ENCODE measurements at regions of chr1 and their contacts with region 1.

Region 1: DNA sequence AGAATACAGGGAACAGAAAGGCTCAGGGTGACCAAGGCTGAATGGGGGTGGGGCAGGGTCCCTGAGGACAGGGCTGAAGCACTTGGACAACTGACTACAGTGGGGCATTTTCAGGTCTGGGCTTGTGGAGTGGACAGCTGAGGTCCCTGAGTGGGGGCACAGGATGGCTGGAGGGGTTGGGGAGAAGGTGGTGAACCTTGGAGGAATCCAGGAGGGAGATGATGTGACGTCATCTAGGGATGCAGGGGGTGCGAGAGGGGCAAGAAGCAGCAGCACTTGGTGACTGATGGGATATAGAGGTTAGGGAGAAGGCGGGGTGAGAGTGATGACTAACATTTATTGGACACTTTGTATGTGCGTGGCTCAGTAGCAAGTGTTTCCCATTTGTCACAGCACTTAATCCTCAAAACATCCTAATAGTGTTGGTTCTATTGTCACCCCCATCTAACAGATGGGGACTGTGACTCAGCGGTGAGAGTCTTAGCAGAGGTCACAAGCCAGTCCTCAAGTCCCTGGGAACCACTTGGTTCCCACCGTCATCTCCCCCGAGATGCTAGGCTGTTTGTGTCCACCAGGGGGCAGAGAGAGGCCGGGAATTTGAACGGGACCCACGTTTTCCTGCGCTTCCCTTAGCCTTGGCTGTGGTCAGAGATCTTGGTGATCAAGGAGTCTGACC is 27.9 kb upstream of the BMP8B start:
- DNase-seq: peak; percentile 77
- H3K4me3 ChIP-seq: peak overlapping the region; percentile 54
- H3K27ac ChIP-seq: peak overlapping the region; percentile 52
- H3K4me1 ChIP-seq: no peaks in the 10 kb centered on the region
- CTCF ChIP-seq: peak; percentile 80

Region 2: GRCh38 chr1:39332291-39332690 is 484.3 kb before region 1 on chr1:
- CTCF ChIA-PET with region 1: no interaction called
- POLR2A ChIA-PET with region 1: no interaction called
- intact Hi-C with region 1: no loop called
- DNase-seq: no peak
- H3K4me3 ChIP-seq: no peak overlapping the region
- H3K27ac ChIP-seq: no peak overlapping the region
- H3K4me1 ChIP-seq: no peaks in the 10 kb centered on the region
- CTCF ChIP-seq: no peak

Region 3: DNA sequence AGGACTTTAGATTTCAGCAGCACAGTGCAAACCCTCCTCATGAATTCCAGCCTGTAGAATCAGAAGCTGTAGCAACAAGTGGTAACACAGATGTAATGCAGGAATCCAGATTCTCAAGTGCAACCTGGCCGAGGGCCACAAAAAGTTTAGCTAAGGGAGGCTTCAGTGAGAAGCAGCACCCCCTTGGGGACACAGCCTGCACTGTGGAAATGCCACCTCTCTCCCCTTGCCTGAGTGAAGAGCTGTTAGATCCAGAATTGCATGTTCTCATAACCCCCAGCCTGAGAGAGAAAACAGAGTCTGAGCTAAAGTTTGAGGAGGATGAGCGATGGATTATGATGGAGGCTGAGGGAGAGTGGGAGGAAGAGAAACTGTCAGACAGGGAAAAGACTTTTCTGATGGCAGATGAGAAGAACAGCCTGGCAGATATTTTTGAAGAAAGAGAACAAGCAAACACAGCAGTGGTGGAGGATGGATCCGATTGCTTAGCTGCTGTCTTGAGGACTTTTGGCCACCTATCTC is 405.6 kb before region 1 on chr1:
- CTCF ChIA-PET with region 1: no interaction called
- POLR2A ChIA-PET with region 1: no interaction called
- intact Hi-C with region 1: no loop called
- DNase-seq: peak; percentile 80
- H3K4me3 ChIP-seq: no peak overlapping the region
- H3K27ac ChIP-seq: no peak overlapping the region
- H3K4me1 ChIP-seq: peaks cover 39% of the 10 kb centered on the region
- CTCF ChIP-seq: peak; percentile 84

Region 4: DNA sequence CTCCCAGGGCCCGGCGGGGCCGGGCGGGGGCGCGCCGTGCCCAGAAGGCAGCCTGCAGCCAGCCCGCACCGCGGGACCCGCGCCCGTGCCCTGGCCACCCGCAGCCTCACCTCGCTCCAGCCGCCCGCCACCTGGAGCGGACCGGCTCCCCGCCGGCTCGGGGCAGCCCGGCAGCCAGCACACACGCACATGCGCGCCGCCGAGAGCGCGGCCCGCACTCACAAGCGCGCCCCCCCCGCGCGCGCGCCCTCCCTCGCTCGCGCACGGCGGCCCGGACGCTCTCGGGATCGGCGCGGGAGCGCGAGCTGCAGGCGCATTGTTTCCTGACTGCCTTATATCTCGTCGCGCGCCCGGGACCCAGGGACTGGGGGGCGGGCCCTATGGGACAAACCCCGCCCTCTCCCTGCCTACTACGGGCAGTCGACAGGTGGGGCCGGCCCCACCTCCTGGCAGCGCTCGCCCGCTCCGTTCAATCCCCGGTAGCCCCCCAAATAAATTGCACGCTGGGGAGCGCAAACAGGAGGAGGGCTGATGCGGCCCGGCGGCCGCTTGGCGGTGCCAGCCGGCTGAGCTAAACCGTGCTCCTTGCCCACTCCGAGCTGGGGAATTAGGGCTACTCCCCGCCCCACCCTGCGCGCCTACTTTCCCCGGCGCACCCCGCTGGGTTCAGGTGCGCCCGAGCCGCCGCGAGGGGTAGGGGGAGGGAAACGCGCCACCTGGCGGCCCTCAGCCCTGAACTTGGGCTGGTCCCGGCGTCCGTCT is 85.3 kb after region 1 on chr1 and contains the start of gene MYCL:
- CTCF ChIA-PET with region 1: interaction called, 5 read pairs
- POLR2A ChIA-PET with region 1: interaction called, 3 read pairs
- intact Hi-C with region 1: loop called (anchors 1 kb)
- DNase-seq: peak; percentile 72
- H3K4me3 ChIP-seq: peak within 1 kb of the TSS; percentile 66
- H3K27ac ChIP-seq: no peak within 1 kb of the TSS
- H3K4me1 ChIP-seq: peaks cover 7% of the 10 kb centered on the region
- CTCF ChIP-seq: peak; percentile 85
- total RNA-seq, gene MYCL: 0.41 and 1.6 TPM in 2 replicates

Region 5: GRCh38 chr1:40032240-40032891 is 215.8 kb after region 1 on chr1:
- CTCF ChIA-PET with region 1: no interaction called
- POLR2A ChIA-PET with region 1: no interaction called
- intact Hi-C with region 1: loop called (anchors 1 kb)
- DNase-seq: peak; percentile 72
- H3K4me3 ChIP-seq: no peak overlapping the region
- H3K27ac ChIP-seq: no peak overlapping the region
- H3K4me1 ChIP-seq: peaks cover 16% of the 10 kb centered on the region
- CTCF ChIP-seq: peak; percentile 97

Measured in OCI-LY7 (cell line).